Activated B cell treated with CpG ODN at 0.5 μM for 24 hours (primary cell): ENCODE measurements at regions of chr1 and their contacts with region 1.

Region 1: GRCh38 chr1:121471523-121471922 is 286.7 kb downstream of the SRGAP2C start:
- DNase-seq: no peak
- ATAC-seq: no peak
- H3K4me3 Mint-ChIP-seq: no peak overlapping the region
- H3K27ac Mint-ChIP-seq: no peak overlapping the region
- H3K4me1 Mint-ChIP-seq: peaks cover 6% of the 10 kb centered on the region
- H3K27me3 Mint-ChIP-seq: no peaks in the 10 kb centered on the region
- CTCF ChIP-seq: no peak

Region 2: GRCh38 chr1:121452484-121452883 is 19.0 kb before region 1 on chr1:
- CTCF ChIA-PET with region 1: no interaction called
- POLR2A ChIA-PET with region 1: no interaction called
- intact Hi-C with region 1: loop called (anchors 1 kb)
- DNase-seq: no peak
- ATAC-seq: no peak
- H3K4me3 Mint-ChIP-seq: no peak overlapping the region
- H3K27ac Mint-ChIP-seq: no peak overlapping the region
- H3K4me1 Mint-ChIP-seq: peaks cover 2% of the 10 kb centered on the region
- H3K27me3 Mint-ChIP-seq: no peaks in the 10 kb centered on the region
- CTCF ChIP-seq: no peak